ENCODE measurements at regions of chr12 and their contacts with region 1.

Region 1: GRCh38 chr12:7995266-7995963 is 37.1 kb upstream of the FOXJ2 start:
- DNase-seq: peak; percentile 61 to 64
- ATAC-seq: peak; percentile 93 to 95
- H3K4me3 ChIP-seq: no peak overlapping the region
- H3K27ac ChIP-seq: no peak overlapping the region
- H3K4me1 ChIP-seq: no peaks in the 10 kb centered on the region
- H3K27me3 ChIP-seq: no peaks in the 10 kb centered on the region
- CTCF ChIP-seq: peak; percentile 59 to 81 (median 76)
- POLR2A ChIP-seq: no peak

Region 2: GRCh38 chr12:7859552-7859951 is 135.9 kb before region 1 on chr12:
- in situ Hi-C with region 1: loop called (anchors 5 to 10 kb)
- intact Hi-C with region 1: loop called (anchors 1 kb)
- DNase-seq: no peak
- ATAC-seq: peak in 1 of 2 donors; percentile 11
- H3K4me3 ChIP-seq: no peak overlapping the region
- H3K27ac ChIP-seq: no peak overlapping the region
- H3K4me1 ChIP-seq: no peaks in the 10 kb centered on the region
- H3K27me3 ChIP-seq: no peaks in the 10 kb centered on the region
- CTCF ChIP-seq: no peak
- POLR2A ChIP-seq: no peak

Region 3: GRCh38 chr12:7933255-7933729 is 62.1 kb before region 1 on chr12:
- in situ Hi-C with region 1: loop called in 1 of 4 experiments (anchors 10 kb)
- intact Hi-C with region 1: loop called (anchors 2 kb)
- DNase-seq: peak; percentile 53 to 63
- ATAC-seq: peak; percentile 82
- H3K4me3 ChIP-seq: peak overlapping the region; percentile 55 to 73 (median 62)
- H3K27ac ChIP-seq: peak overlapping the region; percentile 78 to 88 (median 84)
- H3K4me1 ChIP-seq: peaks cover 0 to 10% of the 10 kb centered on the region in 2 donors
- H3K27me3 ChIP-seq: peaks cover 0 to 6% (median 0%) of the 10 kb centered on the region in 3 donors
- CTCF ChIP-seq: peak; percentile 34 to 54 (median 47)
- POLR2A ChIP-seq: peak; percentile 36 to 63

Measured in gastrocnemius medialis (tissue), 4 donors.